CD14-positive monocyte (primary cell): ENCODE measurements at regions of chr14 and their contacts with region 1.

Region 1: DNA sequence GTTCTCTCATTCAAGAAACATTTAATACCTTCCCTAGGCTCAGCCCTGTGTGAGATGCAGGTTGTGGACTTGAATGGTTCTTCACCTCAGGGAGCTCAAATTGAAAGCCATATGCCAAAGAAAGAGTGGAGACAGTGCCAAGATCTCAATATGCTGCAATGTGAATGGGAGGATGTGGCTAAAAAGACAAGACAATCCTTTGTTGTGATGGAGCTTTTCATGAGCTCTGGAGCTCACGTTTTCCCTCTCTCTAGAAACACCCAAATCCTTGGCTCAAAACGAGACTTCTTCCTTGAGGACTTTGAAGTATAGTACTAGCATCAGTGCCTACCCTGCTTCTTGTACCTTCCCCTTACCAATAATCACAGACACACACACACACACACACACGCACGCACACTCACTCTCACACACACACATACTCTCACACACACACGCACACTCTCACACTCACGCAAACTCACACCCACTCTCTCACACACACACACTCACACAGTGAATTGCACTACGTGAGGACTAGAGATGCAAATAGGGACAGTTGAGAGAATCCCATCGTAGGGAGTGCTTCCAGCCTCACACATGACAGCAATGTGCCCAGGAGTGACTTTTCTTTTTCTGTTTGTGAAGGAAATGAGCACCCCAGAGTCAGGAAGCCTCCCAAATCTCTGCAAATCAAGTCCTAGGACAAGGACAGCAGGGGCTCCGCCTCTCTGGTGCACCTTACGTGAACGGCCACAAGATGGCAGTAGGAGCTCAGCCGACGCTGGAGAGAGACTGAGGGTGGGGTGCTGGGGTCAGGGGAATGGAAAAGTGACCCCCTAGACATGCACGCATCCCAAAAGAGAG is 231.4 kb downstream of the PCNX1 start:
- DNase-seq: peak; percentile 38 to 58 (median 56)
- H3K4me3 ChIP-seq: peak overlapping the region in 1 of 3 experiments; percentile 13
- H3K4me3 Mint-ChIP-seq: peak overlapping the region; percentile 18 to 55
- H3K27ac ChIP-seq: no peak overlapping the region
- H3K27ac Mint-ChIP-seq: peak overlapping the region in 2 of 7 donors; percentile 28 to 78
- H3K4me1 ChIP-seq: peaks cover 40 to 49% of the 10 kb centered on the region in 2 donors
- H3K4me1 Mint-ChIP-seq: peaks cover 43% of the 10 kb centered on the region
- H3K27me3 ChIP-seq: no peaks in the 10 kb centered on the region
- H3K27me3 Mint-ChIP-seq: peaks cover 0 to 3% (median 2%) of the 10 kb centered on the region in 3 donors
- CTCF ChIP-seq: peak; percentile 92

Region 2: GRCh38 chr14:71403656-71404055 is 265.0 kb after region 1 on chr14:
- intact Hi-C with region 1: loop called in 1 of 2 experiments (anchors 10 kb)
- DNase-seq: peak; percentile 28 to 51 (median 45)
- H3K4me3 ChIP-seq: no peak overlapping the region
- H3K4me3 Mint-ChIP-seq: no peak overlapping the region
- H3K27ac ChIP-seq: no peak overlapping the region
- H3K27ac Mint-ChIP-seq: peak overlapping the region in 6 of 7 donors; percentile 21 to 74 (median 46)
- H3K4me1 ChIP-seq: peaks cover 24 to 34% of the 10 kb centered on the region in 2 donors
- H3K4me1 Mint-ChIP-seq: peaks cover 31% of the 10 kb centered on the region
- H3K27me3 ChIP-seq: no peaks in the 10 kb centered on the region
- H3K27me3 Mint-ChIP-seq: no peaks in the 10 kb centered on the region
- CTCF ChIP-seq: peak; percentile 35

Region 3: DNA sequence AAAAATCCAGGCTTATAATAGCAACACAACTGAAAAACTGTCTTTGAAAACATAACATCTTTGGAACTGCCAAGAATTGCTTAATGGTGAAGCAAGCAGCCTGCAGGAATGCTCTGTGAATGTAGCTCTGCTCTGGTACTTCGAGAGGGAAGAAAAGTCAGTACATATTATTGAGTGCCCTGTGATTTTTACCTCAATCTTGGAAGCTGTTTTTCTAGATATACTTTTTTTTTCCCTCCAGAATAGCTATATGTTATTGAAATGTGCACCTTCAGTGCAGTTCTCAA is 276.7 kb after region 1 on chr14:
- intact Hi-C with region 1: loop called in 1 of 2 experiments (anchors 10 kb)
- DNase-seq: no peak
- H3K4me3 ChIP-seq: no peak overlapping the region
- H3K4me3 Mint-ChIP-seq: no peak overlapping the region
- H3K27ac ChIP-seq: no peak overlapping the region
- H3K27ac Mint-ChIP-seq: no peak overlapping the region
- H3K4me1 ChIP-seq: peaks cover 15 to 20% of the 10 kb centered on the region in 2 donors
- H3K4me1 Mint-ChIP-seq: peaks cover 30% of the 10 kb centered on the region
- H3K27me3 ChIP-seq: no peaks in the 10 kb centered on the region
- H3K27me3 Mint-ChIP-seq: no peaks in the 10 kb centered on the region
- CTCF ChIP-seq: no peak

Region 4: DNA sequence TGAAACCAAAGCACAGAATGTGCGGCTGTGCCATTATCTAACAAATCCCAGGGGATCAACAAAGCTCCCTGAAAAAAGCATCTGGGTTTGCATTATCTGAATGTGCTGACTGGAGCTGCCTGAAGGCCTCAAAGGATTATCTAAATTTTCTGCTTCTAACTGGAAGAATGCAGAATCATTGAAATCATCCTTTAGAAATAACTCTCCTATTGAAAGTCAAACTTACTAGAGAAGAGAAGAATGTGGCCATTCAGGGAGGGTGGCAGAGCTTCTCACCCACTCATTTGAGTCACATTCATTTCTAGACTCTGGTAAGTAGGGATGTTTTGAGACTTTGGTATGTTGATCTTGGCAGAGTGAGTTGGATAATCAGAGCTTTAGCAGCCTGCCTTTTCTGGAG is 572.9 kb after region 1 on chr14:
- intact Hi-C with region 1: no loop called
- DNase-seq: no peak
- H3K4me3 ChIP-seq: no peak overlapping the region
- H3K4me3 Mint-ChIP-seq: no peak overlapping the region
- H3K27ac ChIP-seq: no peak overlapping the region
- H3K27ac Mint-ChIP-seq: no peak overlapping the region
- H3K4me1 ChIP-seq: no peaks in the 10 kb centered on the region
- H3K4me1 Mint-ChIP-seq: no peaks in the 10 kb centered on the region
- H3K27me3 ChIP-seq: no peaks in the 10 kb centered on the region
- H3K27me3 Mint-ChIP-seq: peaks cover 0 to 1% (median 0%) of the 10 kb centered on the region in 3 donors
- CTCF ChIP-seq: no peak

Region 5: GRCh38 chr14:71753126-71753830 is 614.6 kb after region 1 on chr14:
- intact Hi-C with region 1: loop called (anchors 1 to 2 kb)
- DNase-seq: peak; percentile 39 to 58 (median 56)
- H3K4me3 ChIP-seq: no peak overlapping the region
- H3K4me3 Mint-ChIP-seq: peak overlapping the region in 1 of 2 donors; percentile 49
- H3K27ac ChIP-seq: no peak overlapping the region
- H3K27ac Mint-ChIP-seq: no peak overlapping the region
- H3K4me1 ChIP-seq: peaks cover 0 to 3% of the 10 kb centered on the region in 2 donors
- H3K4me1 Mint-ChIP-seq: peaks cover 17% of the 10 kb centered on the region
- H3K27me3 ChIP-seq: no peaks in the 10 kb centered on the region
- H3K27me3 Mint-ChIP-seq: peaks cover 0 to 4% (median 4%) of the 10 kb centered on the region in 3 donors
- CTCF ChIP-seq: peak; percentile 87

Region 6: GRCh38 chr14:71918952-71919351 is 780.3 kb after region 1 on chr14:
- intact Hi-C with region 1: no loop called
- DNase-seq: no peak
- H3K4me3 ChIP-seq: no peak overlapping the region
- H3K4me3 Mint-ChIP-seq: no peak overlapping the region
- H3K27ac ChIP-seq: no peak overlapping the region
- H3K27ac Mint-ChIP-seq: no peak overlapping the region
- H3K4me1 ChIP-seq: no peaks in the 10 kb centered on the region
- H3K4me1 Mint-ChIP-seq: no peaks in the 10 kb centered on the region
- H3K27me3 ChIP-seq: no peaks in the 10 kb centered on the region
- H3K27me3 Mint-ChIP-seq: peaks cover 1 to 6% (median 5%) of the 10 kb centered on the region in 3 donors
- CTCF ChIP-seq: no peak